ENCODE measurements at regions of chr16 and their contacts with region 1.

Region 1: DNA sequence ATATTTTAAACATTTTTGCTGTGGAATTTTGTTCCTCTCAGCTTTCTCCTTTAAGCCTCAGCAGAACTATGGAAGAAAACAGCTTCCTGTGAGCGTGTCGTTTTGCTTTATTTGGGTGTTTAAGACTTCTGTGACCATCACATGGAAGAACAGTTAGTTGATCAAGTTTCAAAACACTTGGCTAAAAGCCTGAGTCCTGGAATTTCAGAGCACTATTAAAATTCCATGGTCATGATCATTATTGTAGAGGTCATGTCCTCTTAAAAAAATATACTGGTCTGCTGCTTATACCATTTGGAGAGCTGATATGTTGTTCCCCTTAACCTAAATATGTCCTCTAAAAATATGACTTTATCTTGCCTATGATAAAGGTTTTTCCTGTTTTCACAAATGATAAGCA is 12.6 kb upstream of the CDR2 start:
- DNase-seq: peak; percentile 78
- H3K4me3 ChIP-seq: no peak overlapping the region
- H3K27ac ChIP-seq: no peak overlapping the region
- H3K27me3 ChIP-seq: no peaks in the 10 kb centered on the region
- CTCF ChIP-seq: no peak

Region 2: GRCh38 chr16:22369221-22369811 is 17.7 kb before region 1 on chr16:
- CTCF ChIA-PET with region 1: interaction called, 4 read pairs
- POLR2A ChIA-PET with region 1: interaction called, 16 read pairs
- DNase-seq: peak; percentile 39
- H3K4me3 ChIP-seq: peak overlapping the region; percentile 4
- H3K27ac ChIP-seq: peak overlapping the region; percentile 83
- H3K27me3 ChIP-seq: no peaks in the 10 kb centered on the region
- CTCF ChIP-seq: no peak

Region 3: DNA sequence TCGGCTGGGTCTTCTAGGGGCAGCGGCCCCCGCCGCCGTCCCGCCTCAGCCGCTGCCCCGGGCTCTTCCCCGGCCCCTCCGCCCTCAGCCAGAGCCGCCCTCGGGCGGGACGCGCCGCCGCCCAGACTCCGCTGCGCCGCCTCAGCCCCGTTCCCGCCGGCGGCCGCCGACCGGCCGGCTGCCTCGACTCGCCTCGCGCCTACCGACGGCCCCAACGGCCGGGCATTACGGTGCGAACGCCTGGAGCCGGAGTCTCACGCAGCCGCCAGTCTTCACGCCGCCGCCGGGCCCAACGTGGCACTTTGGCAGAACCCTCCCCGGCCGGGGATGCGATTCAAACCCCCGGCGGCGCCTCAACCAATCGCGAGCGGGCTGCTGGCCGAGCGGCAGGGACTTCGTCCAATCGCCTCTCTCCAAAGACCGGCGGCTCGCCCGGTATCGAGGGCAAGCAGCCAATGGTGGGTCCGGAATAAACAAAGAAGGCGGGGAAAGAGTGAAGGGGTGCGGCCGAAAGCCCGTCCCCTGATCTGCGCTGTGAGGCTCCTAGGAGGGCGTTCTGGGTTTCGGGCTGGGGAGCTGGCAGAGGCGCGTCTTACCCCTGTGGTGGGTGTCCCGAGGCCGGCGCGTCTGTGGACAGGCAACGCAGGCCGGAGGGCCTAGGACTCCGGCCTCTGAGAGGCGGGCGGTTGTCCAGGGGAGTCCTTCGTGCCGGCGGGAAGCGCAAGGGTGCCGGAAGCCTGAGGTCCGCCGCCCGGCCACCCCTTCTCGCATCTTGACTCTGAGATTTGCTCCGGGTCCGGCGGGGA is 12.5 kb before region 1 on chr16 and contains the start of gene CDR2:
- CTCF ChIA-PET with region 1: interaction called, 6 read pairs
- POLR2A ChIA-PET with region 1: interaction called, 16 read pairs
- DNase-seq: peak; percentile 93
- H3K4me3 ChIP-seq: peak within 1 kb of the TSS; percentile 91
- H3K27ac ChIP-seq: peak within 1 kb of the TSS; percentile 86
- H3K27me3 ChIP-seq: no peaks in the 10 kb centered on the region
- CTCF ChIP-seq: no peak
- polyA plus RNA-seq, gene CDR2: 128 and 138 TPM in 2 replicates